CD8-positive, alpha-beta memory T cell (primary cell): ENCODE measurements at regions of chr1 and their contacts with region 1.

Region 1: GRCh38 chr1:212455803-212456528 is 23.2 kb downstream of the NENF start:
- DNase-seq: peak; percentile 62 to 85 (median 77)
- H3K4me3 ChIP-seq: no peak overlapping the region
- H3K4me3 Mint-ChIP-seq: no peak overlapping the region
- H3K27ac ChIP-seq: no peak overlapping the region
- H3K27ac Mint-ChIP-seq: peak overlapping the region in 1 of 8 donors; percentile 66
- H3K4me1 ChIP-seq: no peaks in the 10 kb centered on the region
- H3K4me1 Mint-ChIP-seq: no peaks in the 10 kb centered on the region
- H3K27me3 ChIP-seq: no peaks in the 10 kb centered on the region
- H3K27me3 Mint-ChIP-seq: no peaks in the 10 kb centered on the region

Region 2: GRCh38 chr1:211698161-211699026 is 757.6 kb before region 1 on chr1:
- CTCF ChIA-PET with region 1: interaction called, 11 read pairs
- POLR2A ChIA-PET with region 1: no interaction called
- DNase-seq: peak; percentile 72 to 84 (median 76)
- H3K4me3 ChIP-seq: peak overlapping the region; percentile 51
- H3K4me3 Mint-ChIP-seq: peak overlapping the region in 6 of 7 donors; percentile 65 to 84 (median 76)
- H3K27ac ChIP-seq: no peak overlapping the region
- H3K27ac Mint-ChIP-seq: peak overlapping the region in 3 of 8 donors; percentile 61 to 90 (median 78)
- H3K4me1 ChIP-seq: peaks cover 16% of the 10 kb centered on the region
- H3K4me1 Mint-ChIP-seq: peaks cover 35 to 53% (median 42%) of the 10 kb centered on the region in 3 donors
- H3K27me3 ChIP-seq: no peaks in the 10 kb centered on the region
- H3K27me3 Mint-ChIP-seq: no peaks in the 10 kb centered on the region

Region 3: DNA sequence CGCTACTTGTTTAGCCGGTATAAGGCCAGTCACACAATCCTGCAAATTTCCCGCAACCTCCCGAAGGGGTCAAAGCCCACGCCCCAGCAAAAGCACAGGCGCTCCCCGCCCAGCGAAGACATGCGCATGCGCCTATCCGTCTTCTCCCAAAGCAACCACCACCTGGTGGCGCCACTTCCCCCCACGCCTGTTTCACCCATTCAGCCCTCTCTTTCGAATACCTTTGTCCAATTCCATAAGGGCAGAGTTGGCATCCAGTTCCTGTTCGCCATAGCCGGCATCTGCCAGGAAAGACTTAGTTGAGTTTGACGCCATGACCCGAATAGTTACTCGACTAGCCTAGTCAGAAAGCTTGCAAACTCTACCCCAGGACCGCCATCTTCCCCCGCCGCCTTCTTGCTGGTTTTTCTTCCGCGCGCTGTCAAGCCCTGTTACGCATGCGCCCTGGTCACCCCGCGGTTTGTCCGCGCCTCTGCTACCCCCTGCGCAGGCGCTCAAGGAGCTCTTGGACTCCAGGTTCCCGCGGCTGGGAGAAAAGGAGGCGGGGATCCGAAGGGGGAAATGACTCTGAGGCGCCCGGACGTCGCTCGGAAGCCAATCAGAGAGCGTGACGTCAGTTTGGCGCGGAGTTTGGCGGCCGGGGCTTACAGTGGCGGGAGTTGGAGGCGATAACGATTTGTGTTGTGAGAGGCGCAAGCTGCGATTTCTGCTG is 420.7 kb before region 1 on chr1 and contains the starts of genes DTL and INTS7:
- CTCF ChIA-PET with region 1: interaction called, 30 read pairs
- POLR2A ChIA-PET with region 1: no interaction called
- DNase-seq: peak; percentile 96 to 99 (median 98)
- H3K4me3 ChIP-seq: peak within 1 kb of the TSS; percentile 96
- H3K4me3 Mint-ChIP-seq: peak within 1 kb of the TSS; percentile 90 to 100 (median 99)
- H3K27ac ChIP-seq: peak within 1 kb of the TSS; percentile 70
- H3K27ac Mint-ChIP-seq: peak within 1 kb of the TSS; percentile 84 to 99 (median 95)
- H3K4me1 ChIP-seq: peaks cover 26% of the 10 kb centered on the region
- H3K4me1 Mint-ChIP-seq: peaks cover 40 to 76% (median 70%) of the 10 kb centered on the region in 3 donors
- H3K27me3 ChIP-seq: no peaks in the 10 kb centered on the region
- H3K27me3 Mint-ChIP-seq: peaks cover 0 to 5% of the 10 kb centered on the region in 2 donors
- total RNA-seq, gene DTL: 85.0 to 86.9 TPM
- total RNA-seq, gene INTS7: 35.2 to 36.0 TPM

Region 4: GRCh38 chr1:212070720-212071302 is 385.2 kb before region 1 on chr1:
- CTCF ChIA-PET with region 1: interaction called, 201 read pairs
- POLR2A ChIA-PET with region 1: no interaction called
- DNase-seq: peak in 2 of 5 donors; percentile 36 to 43
- H3K4me3 ChIP-seq: no peak overlapping the region
- H3K4me3 Mint-ChIP-seq: no peak overlapping the region
- H3K27ac ChIP-seq: no peak overlapping the region
- H3K27ac Mint-ChIP-seq: peak overlapping the region in 1 of 8 donors; percentile 61
- H3K4me1 ChIP-seq: no peaks in the 10 kb centered on the region
- H3K4me1 Mint-ChIP-seq: no peaks in the 10 kb centered on the region
- H3K27me3 ChIP-seq: no peaks in the 10 kb centered on the region
- H3K27me3 Mint-ChIP-seq: no peaks in the 10 kb centered on the region

Region 5: GRCh38 chr1:212147581-212148033 is 308.4 kb before region 1 on chr1:
- CTCF ChIA-PET with region 1: no interaction called
- POLR2A ChIA-PET with region 1: no interaction called
- DNase-seq: no peak
- H3K4me3 ChIP-seq: no peak overlapping the region
- H3K4me3 Mint-ChIP-seq: no peak overlapping the region
- H3K27ac ChIP-seq: no peak overlapping the region
- H3K27ac Mint-ChIP-seq: no peak overlapping the region
- H3K4me1 ChIP-seq: no peaks in the 10 kb centered on the region
- H3K4me1 Mint-ChIP-seq: no peaks in the 10 kb centered on the region
- H3K27me3 ChIP-seq: no peaks in the 10 kb centered on the region
- H3K27me3 Mint-ChIP-seq: no peaks in the 10 kb centered on the region

Region 6: DNA sequence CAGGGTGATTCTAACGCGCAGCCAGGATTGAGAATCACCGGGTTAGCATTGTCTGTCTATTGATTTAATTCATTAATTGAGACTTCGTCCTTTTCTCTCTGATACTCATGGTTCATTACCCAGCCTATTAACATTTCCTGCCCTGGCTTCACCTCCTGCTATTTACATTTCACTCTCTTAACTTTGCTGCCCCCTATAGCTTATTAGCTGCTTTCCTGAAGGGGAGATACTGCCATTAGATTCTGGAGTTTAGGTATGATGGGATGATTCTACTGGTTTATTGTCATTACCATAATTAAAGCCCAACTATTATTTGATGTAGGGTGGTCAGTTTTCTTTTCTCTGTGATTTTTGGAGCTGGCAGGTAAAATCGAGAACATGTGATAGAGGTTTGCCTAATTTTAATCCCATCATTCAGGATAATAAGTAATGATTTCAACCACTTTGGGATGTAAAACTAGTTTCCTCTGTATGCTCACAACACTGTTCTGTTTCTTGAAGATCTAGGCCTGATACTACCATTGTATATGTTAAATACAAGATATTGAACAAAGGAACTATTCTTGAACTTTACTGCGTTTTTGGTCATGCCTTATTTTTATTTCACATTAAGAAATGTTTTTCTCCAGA is 164.3 kb before region 1 on chr1:
- CTCF ChIA-PET with region 1: interaction called, 10 read pairs
- POLR2A ChIA-PET with region 1: no interaction called
- DNase-seq: peak in 2 of 5 donors; percentile 49 to 59
- H3K4me3 ChIP-seq: no peak overlapping the region
- H3K4me3 Mint-ChIP-seq: peak overlapping the region; percentile 25 to 73 (median 53)
- H3K27ac ChIP-seq: no peak overlapping the region
- H3K27ac Mint-ChIP-seq: peak overlapping the region; percentile 2 to 76 (median 46)
- H3K4me1 ChIP-seq: peaks cover 83% of the 10 kb centered on the region
- H3K4me1 Mint-ChIP-seq: peaks cover 80 to 95% (median 91%) of the 10 kb centered on the region in 3 donors
- H3K27me3 ChIP-seq: no peaks in the 10 kb centered on the region
- H3K27me3 Mint-ChIP-seq: no peaks in the 10 kb centered on the region

Region 7: DNA sequence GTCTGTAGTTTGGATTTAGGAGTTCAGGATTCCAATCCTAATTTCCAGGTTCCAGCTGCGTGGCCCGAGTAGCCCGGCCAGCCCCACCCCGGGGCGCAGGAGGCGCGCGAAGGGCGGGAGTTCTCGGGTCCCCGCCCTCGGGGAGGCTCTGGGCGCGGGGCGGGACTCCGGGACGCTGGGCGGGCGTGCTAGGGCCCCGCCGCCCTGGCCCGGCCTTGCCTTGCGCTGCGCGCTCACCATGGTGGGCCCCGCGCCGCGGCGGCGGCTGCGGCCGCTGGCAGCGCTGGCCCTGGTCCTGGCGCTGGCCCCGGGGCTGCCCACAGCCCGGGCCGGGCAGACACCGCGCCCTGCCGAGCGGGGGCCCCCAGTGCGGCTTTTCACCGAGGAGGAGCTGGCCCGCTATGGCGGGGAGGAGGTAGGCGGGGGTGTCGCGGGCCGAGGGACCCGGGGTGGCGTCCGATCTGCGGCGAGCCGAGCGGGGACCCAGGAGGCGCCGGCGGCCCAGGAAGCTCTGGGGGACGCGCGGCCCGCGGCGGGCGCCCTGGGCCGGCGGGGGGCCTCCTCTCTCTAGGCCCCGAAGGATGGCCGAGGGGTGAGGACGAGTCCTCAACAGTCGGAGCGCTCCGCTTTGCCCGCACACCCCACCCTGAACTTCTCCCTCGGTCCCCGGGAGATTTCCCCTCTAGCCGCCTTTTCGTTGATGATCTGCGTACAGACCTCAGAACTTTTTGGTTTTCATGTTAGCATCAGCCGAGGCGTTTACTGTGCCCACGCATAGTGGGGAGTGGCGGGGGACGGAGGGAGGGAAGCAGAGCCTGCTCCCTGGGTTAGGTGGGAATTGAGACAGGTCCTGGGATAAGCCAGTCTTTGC is 23.0 kb before region 1 on chr1 and contains the start of gene NENF:
- CTCF ChIA-PET with region 1: interaction called, 15 read pairs
- POLR2A ChIA-PET with region 1: interaction called, 3 read pairs
- DNase-seq: peak; percentile 60 to 81 (median 72)
- H3K4me3 ChIP-seq: peak within 1 kb of the TSS; percentile 67
- H3K4me3 Mint-ChIP-seq: peak within 1 kb of the TSS; percentile 78 to 91 (median 82)
- H3K27ac ChIP-seq: peak within 1 kb of the TSS; percentile 64
- H3K27ac Mint-ChIP-seq: peak within 1 kb of the TSS in 6 of 8 donors; percentile 32 to 96 (median 72)
- H3K4me1 ChIP-seq: peaks cover 25% of the 10 kb centered on the region
- H3K4me1 Mint-ChIP-seq: peaks cover 22 to 42% (median 37%) of the 10 kb centered on the region in 3 donors
- H3K27me3 ChIP-seq: no peaks in the 10 kb centered on the region
- H3K27me3 Mint-ChIP-seq: peaks cover 0 to 4% of the 10 kb centered on the region in 2 donors
- total RNA-seq, gene NENF: 45.5 to 47.9 TPM

Region 8: GRCh38 chr1:212477014-212477679 is 21.2 kb after region 1 on chr1:
- CTCF ChIA-PET with region 1: interaction called, 15 read pairs
- POLR2A ChIA-PET with region 1: no interaction called
- DNase-seq: peak; percentile 51 to 76 (median 65)
- H3K4me3 ChIP-seq: no peak overlapping the region
- H3K4me3 Mint-ChIP-seq: peak overlapping the region in 1 of 7 donors; percentile 28
- H3K27ac ChIP-seq: no peak overlapping the region
- H3K27ac Mint-ChIP-seq: peak overlapping the region in 2 of 8 donors; percentile 14 to 47
- H3K4me1 ChIP-seq: no peaks in the 10 kb centered on the region
- H3K4me1 Mint-ChIP-seq: peaks cover 12 to 17% (median 12%) of the 10 kb centered on the region in 3 donors
- H3K27me3 ChIP-seq: peaks cover 3% of the 10 kb centered on the region
- H3K27me3 Mint-ChIP-seq: peaks cover 15 to 24% of the 10 kb centered on the region in 2 donors